Mammary epithelial cell (primary cell): ENCODE measurements at regions of chr11 and their contacts with region 1.

Region 1: DNA sequence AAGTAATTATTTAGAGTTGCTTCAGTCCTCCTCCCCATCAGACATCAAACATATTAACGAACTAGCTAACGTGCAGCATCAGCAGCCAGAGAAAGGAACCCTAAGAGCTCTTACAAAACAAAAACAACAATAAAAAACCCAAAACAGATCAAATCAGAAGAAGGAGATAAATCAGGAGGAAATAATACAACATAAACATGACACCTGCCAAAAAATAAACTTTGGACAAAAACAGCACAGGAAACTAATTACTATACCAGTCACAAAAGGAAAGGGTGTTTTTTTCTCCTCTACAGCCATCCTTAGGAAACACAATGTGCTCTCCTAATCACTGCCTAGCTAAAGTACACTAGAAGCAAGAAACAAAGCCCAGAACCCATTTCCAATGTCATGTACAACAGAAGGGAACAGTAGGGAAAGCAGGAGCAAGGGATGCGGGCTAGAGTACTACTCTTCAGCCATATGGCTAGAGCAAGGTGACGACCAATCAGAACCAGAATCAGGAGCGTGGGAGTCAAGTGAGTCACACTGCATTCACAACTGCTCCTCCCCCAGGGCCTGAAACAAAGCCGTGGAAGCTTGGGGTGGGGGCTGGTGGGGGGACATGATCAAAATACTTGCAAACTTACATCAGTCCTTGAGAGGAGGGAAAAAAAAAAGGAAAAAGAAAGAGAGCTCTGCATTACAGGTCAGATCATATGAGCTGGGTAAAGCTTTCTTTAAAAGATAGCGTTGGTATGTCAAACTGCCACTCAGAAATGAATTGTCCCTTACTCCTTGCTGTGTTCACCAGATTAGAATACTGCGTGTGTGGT is 60.4 kb downstream of the LARGE2 start:
- DNase-seq: peak; percentile 62
- H3K4me3 ChIP-seq: no peak overlapping the region
- H3K27ac ChIP-seq: no peak overlapping the region
- H3K4me1 ChIP-seq: peaks cover 7% of the 10 kb centered on the region
- H3K27me3 ChIP-seq: no peaks in the 10 kb centered on the region
- CTCF ChIP-seq: no peak

Region 2: DNA sequence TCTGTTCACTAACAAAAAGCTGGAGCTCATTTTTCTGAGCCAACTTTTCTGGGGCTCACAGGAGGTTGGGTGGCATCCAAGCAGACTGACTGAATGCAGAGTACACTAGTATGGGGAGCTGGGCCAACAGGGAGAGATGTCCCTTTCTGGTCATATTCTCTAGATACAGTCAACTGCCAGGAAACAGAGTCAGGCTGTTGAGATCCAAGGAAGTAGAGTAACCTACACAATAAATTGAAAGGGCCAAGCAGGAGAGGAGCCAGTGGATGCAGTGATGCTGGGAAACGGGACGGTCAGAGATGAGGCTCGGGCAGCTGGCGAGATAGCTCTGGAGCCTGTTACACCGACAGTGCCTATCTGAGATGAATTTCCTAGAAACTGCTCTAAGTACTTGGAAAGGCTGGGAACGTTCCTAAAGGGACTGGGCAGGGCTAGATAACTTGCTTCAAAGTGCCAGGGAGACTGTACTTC is 10.7 kb after region 1 on chr11:
- CTCF ChIA-PET with region 1: no interaction called
- dilution Hi-C with region 1: no loop called
- in situ Hi-C with region 1: no loop called
- intact Hi-C with region 1: loop called (anchors 1 kb)
- DNase-seq: no peak
- H3K4me3 ChIP-seq: no peak overlapping the region
- H3K27ac ChIP-seq: no peak overlapping the region
- H3K4me1 ChIP-seq: no peaks in the 10 kb centered on the region
- H3K27me3 ChIP-seq: no peaks in the 10 kb centered on the region
- CTCF ChIP-seq: no peak

Region 3: GRCh38 chr11:46050003-46050461 is 67.2 kb after region 1 on chr11:
- CTCF ChIA-PET with region 1: no interaction called
- dilution Hi-C with region 1: loop called (anchors 5 kb)
- in situ Hi-C with region 1: no loop called
- intact Hi-C with region 1: no loop called
- DNase-seq: peak; percentile 67
- H3K4me3 ChIP-seq: no peak overlapping the region
- H3K27ac ChIP-seq: no peak overlapping the region
- H3K4me1 ChIP-seq: peaks cover 12% of the 10 kb centered on the region
- H3K27me3 ChIP-seq: no peaks in the 10 kb centered on the region
- CTCF ChIP-seq: no peak

Region 4: DNA sequence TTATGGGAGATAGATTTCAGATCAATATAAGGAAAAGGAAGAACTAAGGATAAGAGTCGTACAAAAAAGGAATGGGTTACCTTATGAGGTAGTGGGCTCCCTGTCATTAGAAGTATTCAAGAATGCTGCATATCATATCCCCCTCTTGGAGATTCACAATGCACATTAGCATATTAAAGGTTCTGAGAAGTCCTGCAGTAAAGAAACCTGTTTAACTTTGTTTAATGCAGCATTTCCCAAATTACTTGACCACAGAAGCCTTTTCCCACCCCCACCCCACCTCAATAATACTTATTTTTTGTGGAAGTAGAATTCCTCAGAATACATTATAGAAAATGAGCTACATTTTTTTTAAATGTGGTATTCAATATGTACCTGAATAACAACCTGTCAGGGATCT is 107.5 kb after region 1 on chr11:
- CTCF ChIA-PET with region 1: interaction called, 13 read pairs
- dilution Hi-C with region 1: no loop called
- in situ Hi-C with region 1: no loop called
- intact Hi-C with region 1: no loop called
- DNase-seq: no peak
- H3K4me3 ChIP-seq: no peak overlapping the region
- H3K27ac ChIP-seq: no peak overlapping the region
- H3K4me1 ChIP-seq: no peaks in the 10 kb centered on the region
- H3K27me3 ChIP-seq: no peaks in the 10 kb centered on the region
- CTCF ChIP-seq: no peak

Region 5: DNA sequence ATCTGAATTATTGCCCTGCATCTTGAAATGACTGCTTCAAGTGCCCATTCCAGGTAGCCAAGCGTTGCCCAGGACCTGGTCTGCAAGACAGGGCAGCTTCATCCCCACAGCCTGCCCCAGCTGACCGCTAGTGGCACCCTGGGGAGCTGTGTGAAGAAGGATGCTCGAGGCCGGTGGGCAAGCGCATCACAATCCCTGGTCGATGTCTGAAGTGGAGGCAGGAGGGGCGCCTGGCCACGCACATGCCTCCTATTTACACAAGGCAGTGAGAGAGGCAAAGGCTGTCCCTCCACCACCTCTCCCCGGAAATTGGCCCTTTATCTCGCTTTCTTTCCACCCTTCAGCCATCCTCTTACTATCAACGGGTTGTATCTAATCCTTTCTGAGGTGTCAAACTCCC is 166.5 kb after region 1 on chr11:
- CTCF ChIA-PET with region 1: no interaction called
- dilution Hi-C with region 1: no loop called
- in situ Hi-C with region 1: no loop called
- intact Hi-C with region 1: no loop called
- DNase-seq: no peak
- H3K4me3 ChIP-seq: no peak overlapping the region
- H3K27ac ChIP-seq: no peak overlapping the region
- H3K4me1 ChIP-seq: no peaks in the 10 kb centered on the region
- H3K27me3 ChIP-seq: peaks cover 2% of the 10 kb centered on the region
- CTCF ChIP-seq: no peak